Naive thymus-derived CD4-positive, alpha-beta T cell (primary cell): ENCODE measurements at regions of chr7 and their contacts with region 1.

Region 1: GRCh38 chr7:70082099-70082611 is 483.9 kb downstream of the AUTS2 start:
- DNase-seq: no peak
- ATAC-seq: no peak
- H3K4me3 ChIP-seq: no peak overlapping the region
- H3K4me3 Mint-ChIP-seq: no peak overlapping the region
- H3K27ac ChIP-seq: no peak overlapping the region
- H3K27ac Mint-ChIP-seq: peak overlapping the region in 1 of 9 donors; percentile 9
- H3K4me1 ChIP-seq: no peaks in the 10 kb centered on the region
- H3K4me1 Mint-ChIP-seq: no peaks in the 10 kb centered on the region
- H3K27me3 ChIP-seq: no peaks in the 10 kb centered on the region
- H3K27me3 Mint-ChIP-seq: no peaks in the 10 kb centered on the region

Region 2: GRCh38 chr7:70143075-70144044 is 61.2 kb after region 1 on chr7:
- CTCF ChIA-PET with region 1: no interaction called
- POLR2A ChIA-PET with region 1: no interaction called
- intact Hi-C with region 1: loop called in 1 of 2 experiments (anchors 10 kb)
- DNase-seq: no peak
- ATAC-seq: no peak
- H3K4me3 ChIP-seq: no peak overlapping the region
- H3K4me3 Mint-ChIP-seq: no peak overlapping the region
- H3K27ac ChIP-seq: no peak overlapping the region
- H3K27ac Mint-ChIP-seq: no peak overlapping the region
- H3K4me1 ChIP-seq: no peaks in the 10 kb centered on the region
- H3K4me1 Mint-ChIP-seq: no peaks in the 10 kb centered on the region
- H3K27me3 ChIP-seq: no peaks in the 10 kb centered on the region
- H3K27me3 Mint-ChIP-seq: no peaks in the 10 kb centered on the region